ENCODE measurements at regions of chr7 and their contacts with region 1.

Region 1: DNA sequence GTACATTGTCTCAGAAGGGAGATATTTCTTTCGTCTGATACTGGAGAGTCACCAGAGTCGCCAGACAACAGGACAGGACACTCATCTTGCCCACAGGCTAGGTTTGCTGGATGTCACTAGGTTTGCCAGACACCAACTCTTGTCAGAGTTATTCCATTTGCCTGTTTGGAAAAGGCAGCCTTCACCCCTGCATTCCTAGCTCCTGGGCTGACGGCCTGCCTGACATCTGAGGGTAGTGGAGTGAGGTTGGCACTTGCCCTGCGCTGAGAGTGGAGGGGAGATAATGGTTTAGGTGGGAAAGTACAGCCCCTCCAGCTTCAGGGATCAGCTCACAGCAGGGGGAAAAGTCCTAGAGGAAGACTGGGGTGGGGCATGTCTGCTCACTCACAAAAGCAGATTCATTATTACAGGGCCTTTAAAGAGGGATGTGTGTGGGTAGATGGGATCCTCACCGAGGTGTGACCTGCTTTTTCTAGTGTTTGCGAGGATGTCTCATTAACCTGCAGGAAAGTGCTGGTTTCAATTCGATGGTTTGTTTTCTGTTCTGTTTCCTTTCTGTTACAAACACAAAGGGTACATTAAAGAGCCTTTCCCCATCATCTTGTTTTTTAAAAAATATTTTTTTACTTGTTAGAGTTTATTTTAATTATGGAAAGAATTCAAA is 79.3 kb upstream of the TNS3 start:
- DNase-seq: no peak
- ATAC-seq: no peak
- H3K4me3 Mint-ChIP-seq: no peak overlapping the region
- H3K27ac Mint-ChIP-seq: no peak overlapping the region
- H3K4me1 Mint-ChIP-seq: peaks cover 23% of the 10 kb centered on the region
- H3K27me3 Mint-ChIP-seq: no peaks in the 10 kb centered on the region
- CTCF ChIP-seq: no peak

Region 2: DNA sequence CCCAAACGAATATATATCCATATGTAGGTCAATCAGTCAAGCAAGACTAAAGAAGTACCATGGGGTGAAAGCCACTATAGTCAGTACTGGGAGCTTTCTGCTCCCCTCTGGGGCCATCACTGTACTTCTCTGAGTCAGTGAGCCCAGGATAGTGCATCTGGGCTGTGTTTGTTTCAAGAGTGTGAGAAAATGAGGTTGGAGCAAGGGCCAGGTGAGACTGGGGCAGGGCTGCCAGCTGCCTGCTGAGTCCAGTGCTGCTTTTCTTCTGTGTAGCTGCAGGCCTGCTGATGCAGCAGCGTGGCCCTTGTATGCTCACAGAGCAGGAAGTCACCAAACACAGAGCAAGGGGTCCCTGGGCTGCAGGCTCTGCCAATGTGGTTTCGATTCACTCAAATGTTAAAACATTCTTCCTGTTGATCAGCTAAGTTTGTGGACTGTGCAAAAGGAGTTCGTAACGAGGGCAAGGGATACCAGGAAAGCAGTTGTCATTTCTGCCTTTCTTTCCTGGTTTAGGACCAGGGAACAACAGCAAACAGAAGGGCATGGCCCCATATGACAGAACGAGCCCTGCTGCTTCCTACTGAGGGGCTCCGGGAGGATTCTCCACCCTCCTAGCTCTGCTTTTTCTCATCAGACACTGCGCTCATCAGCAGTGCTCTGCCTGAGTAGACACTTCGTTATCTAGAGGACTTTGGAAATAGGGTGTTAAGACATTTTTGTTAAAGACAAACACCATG is 13.8 kb before region 1 on chr7:
- CTCF ChIA-PET with region 1: no interaction called
- POLR2A ChIA-PET with region 1: interaction called, 4 read pairs
- intact Hi-C with region 1: loop called (anchors 1 kb)
- DNase-seq: no peak
- ATAC-seq: peak; percentile 91
- H3K4me3 Mint-ChIP-seq: peak overlapping the region; percentile 64
- H3K27ac Mint-ChIP-seq: peak overlapping the region; percentile 72
- H3K4me1 Mint-ChIP-seq: peaks cover 50% of the 10 kb centered on the region
- H3K27me3 Mint-ChIP-seq: no peaks in the 10 kb centered on the region
- CTCF ChIP-seq: no peak

Region 3: GRCh38 chr7:47873762-47874161 is 212.6 kb after region 1 on chr7:
- CTCF ChIA-PET with region 1: no interaction called
- POLR2A ChIA-PET with region 1: no interaction called
- intact Hi-C with region 1: no loop called
- DNase-seq: no peak
- ATAC-seq: no peak
- H3K4me3 Mint-ChIP-seq: no peak overlapping the region
- H3K27ac Mint-ChIP-seq: no peak overlapping the region
- H3K4me1 Mint-ChIP-seq: no peaks in the 10 kb centered on the region
- H3K27me3 Mint-ChIP-seq: no peaks in the 10 kb centered on the region
- CTCF ChIP-seq: no peak